GM10248 (cell line): ENCODE measurements at regions of chr4 and their contacts with region 1.

Region 1: GRCh38 chr4:81351654-81352445 is 119.9 kb downstream of the RASGEF1B start:
- DNase-seq: peak; percentile 43
- CTCF ChIP-seq: peak; percentile 96

Region 2: GRCh38 chr4:81335122-81335912 is 16.5 kb before region 1 on chr4:
- CTCF ChIA-PET with region 1: interaction called, 22 read pairs
- POLR2A ChIA-PET with region 1: no interaction called
- DNase-seq: no peak
- CTCF ChIP-seq: no peak

Region 3: DNA sequence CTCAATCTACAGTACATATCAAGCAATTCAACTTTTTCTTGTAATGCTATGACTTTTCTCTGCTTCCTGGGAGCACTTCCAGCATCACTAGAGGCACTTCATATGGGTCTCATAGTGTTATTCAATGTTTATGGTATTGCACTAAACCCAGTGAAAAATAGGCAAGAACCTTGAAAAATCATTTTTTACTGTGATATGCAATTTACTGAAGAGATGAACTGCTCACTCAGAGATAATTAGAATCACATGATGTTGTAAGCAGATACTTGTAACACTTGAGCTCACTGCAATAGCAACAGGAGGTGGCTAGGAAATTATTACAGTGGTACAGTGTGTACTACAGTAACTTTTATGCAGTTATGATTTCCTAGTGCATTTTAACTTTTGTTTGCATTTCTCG is 26.5 kb after region 1 on chr4:
- CTCF ChIA-PET with region 1: no interaction called
- POLR2A ChIA-PET with region 1: no interaction called
- DNase-seq: no peak
- CTCF ChIP-seq: no peak